Activated CD4-positive, alpha-beta T cell treated with anti-CD3 and anti-CD28 coated beads for 36 hours (primary cell): ENCODE measurements at regions of chr2 and their contacts with region 1.

Region 1: DNA sequence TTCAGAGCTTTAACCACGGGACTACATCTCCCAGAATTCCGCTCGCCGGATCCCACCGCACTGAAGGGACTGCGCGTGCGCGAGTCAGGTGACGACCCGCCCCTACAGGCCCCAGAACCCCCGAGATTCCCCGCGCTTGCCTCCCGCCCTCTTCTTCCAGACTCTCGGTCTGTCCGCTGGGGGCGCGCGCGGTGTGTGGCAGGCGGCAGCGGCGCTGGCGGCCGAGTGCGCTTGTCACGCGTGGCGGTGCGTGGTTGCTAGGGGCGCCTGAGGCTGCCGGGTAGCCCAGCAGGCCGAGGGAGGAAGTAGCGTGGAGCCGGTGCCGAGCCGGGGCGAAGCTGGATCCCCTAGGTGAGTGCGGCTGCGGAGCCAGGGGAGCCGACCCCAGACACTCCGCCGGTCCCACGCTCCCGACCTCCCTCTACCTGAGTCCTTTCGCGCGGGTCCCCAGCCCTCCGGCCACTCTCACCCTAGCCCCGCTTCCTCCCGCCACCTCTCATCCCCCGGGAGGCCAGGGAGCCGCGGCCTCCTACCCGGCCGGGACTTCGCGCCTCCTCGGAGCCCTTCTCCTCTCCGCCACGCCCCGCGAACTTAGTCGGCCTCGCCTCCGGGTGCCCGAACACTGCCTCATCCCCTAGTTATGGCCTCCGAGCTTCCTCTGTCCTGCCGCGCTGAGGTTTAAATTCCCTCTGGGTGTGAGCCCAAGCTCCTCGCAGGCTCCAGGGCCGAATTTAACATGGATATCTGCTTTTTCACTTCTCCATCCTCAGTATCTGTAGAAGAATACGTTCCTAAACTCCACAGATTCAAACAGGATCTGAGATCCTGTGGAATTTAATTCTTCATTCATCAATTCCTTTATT is at the start of gene TTLL4:
- DNase-seq: peak; percentile 99
- ATAC-seq: peak; percentile 98
- H3K4me3 Mint-ChIP-seq: peak within 1 kb of the TSS; percentile 96
- H3K27ac Mint-ChIP-seq: peak within 1 kb of the TSS; percentile 80
- H3K4me1 Mint-ChIP-seq: peaks cover 20% of the 10 kb centered on the region
- H3K27me3 Mint-ChIP-seq: no peaks in the 10 kb centered on the region
- total RNA-seq, gene TTLL4: 33.7 to 46.6 TPM

Region 2: DNA sequence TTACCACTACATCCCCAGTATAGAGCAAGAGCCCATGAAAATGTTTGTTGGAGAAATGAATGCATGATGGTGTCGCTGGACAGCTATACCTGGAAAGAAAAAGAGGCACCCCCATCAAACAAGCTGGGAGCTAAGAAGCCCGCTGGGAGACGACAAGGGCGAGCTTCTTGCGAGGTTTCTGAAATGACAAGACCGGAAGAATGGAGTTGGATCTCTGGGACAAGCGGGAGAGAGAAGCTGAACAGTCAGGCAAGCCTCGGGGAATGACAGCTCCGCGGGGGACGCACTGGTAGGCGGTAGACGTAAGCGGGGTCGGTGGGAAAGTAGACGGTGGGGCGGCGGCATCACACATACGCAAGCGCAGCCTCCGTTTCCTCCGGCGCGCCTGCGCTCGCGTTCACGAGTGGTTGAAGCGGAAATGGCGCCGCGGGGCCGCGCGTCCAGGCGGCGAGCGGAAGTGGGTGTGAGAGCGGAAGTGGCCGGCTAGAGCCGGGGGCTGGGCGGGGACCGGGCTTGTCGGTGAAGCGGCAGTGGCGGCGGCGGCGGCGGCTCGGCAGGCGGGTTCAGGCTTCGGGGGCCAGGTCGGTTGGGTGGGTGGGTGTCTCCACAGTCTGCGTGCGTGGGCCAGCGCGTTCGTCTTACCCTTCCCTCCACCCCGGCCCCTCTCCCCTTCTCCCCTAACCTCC is 494.1 kb before region 1 on chr2 and contains the start of gene ARPC2:
- CTCF ChIA-PET with region 1: no interaction called
- POLR2A ChIA-PET with region 1: no interaction called
- intact Hi-C with region 1: loop called in 1 of 2 experiments (anchors 1 kb)
- DNase-seq: peak; percentile 96
- ATAC-seq: peak; percentile 64
- H3K4me3 Mint-ChIP-seq: peak within 1 kb of the TSS; percentile 81
- H3K27ac Mint-ChIP-seq: peak within 1 kb of the TSS; percentile 96
- H3K4me1 Mint-ChIP-seq: peaks cover 34% of the 10 kb centered on the region
- H3K27me3 Mint-ChIP-seq: no peaks in the 10 kb centered on the region
- total RNA-seq, gene ARPC2: 563 to 632 TPM

Region 3: DNA sequence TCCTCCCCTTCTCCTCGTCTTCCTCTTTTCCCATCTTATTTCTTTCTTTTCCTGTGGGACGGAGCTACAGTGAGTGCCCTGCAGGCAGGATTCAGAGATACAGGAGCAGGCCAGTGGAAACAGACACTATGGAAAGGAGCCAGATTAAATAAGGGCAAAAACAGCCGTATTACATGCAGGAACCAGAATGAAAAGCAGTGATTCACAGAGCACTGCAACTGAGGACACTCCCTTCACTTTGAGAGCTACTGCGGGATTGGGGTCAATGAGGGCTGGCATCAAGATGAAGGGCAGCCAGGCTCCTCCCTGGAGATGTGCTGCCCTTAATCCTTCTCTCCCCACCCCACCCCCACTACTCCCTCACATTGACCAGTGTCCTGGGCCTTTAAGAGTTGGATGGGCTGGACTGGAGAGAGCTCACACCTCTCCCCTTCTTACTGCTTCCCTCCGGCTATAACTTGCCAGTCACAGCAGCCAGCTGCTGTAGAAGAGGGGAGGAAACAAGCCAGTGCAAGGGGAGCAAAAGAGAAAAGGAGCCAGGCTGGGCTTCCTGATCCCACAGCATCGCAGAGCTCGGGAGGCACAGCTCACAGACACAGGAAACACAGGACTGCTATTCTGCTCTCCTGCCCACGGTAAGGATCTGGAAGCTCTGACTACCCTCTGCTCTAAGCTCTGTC is 103.3 kb before region 1 on chr2 and contains the start of gene PLCD4:
- CTCF ChIA-PET with region 1: no interaction called
- POLR2A ChIA-PET with region 1: no interaction called
- intact Hi-C with region 1: no loop called
- DNase-seq: no peak
- ATAC-seq: no peak
- H3K4me3 Mint-ChIP-seq: no peak within 1 kb of the TSS
- H3K27ac Mint-ChIP-seq: no peak within 1 kb of the TSS
- H3K4me1 Mint-ChIP-seq: no peaks in the 10 kb centered on the region
- H3K27me3 Mint-ChIP-seq: peaks cover 12% of the 10 kb centered on the region
- total RNA-seq, gene PLCD4: 0.18 to 0.83 TPM

Region 4: DNA sequence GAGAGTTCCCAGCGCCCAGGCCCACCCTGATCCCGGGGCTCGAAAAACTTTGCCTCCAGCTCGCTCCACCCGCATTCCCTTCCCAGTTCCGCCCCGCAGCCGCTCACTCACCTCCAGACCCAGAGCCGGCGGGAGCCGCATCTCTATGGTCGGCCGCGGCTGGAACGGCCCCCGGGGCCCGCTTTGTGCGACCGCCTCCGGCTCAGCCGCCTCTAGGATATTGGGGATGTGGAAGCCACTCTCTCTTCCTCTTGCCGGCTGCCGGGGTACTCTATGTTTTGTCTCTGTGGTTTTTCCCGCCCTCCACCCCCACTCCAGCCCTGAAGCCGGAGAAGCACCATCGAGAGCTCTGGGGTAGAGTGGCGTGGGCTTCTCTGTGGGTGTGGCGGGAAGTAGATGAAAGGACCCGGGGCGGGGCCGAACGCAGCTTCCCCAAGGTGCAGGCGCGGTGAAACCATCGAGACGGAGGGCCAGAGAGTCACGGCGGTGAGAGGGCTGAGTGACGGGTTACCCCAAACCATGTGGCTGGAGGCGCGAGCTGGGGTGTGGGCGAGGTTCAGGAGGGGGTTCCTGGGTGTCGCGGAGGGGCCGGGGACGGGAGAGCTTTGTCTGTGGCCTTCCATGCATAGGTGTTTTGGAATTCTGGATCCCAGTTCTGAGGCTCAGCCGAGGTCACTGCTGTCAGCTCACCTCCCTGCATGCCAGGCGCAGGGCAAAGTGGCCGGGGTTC is 51.5 kb before region 1 on chr2 and contains the starts of genes BCS1L and ZNF142:
- CTCF ChIA-PET with region 1: interaction called, 5 read pairs
- POLR2A ChIA-PET with region 1: interaction called, 4 read pairs
- intact Hi-C with region 1: loop called (anchors 1 kb)
- DNase-seq: peak; percentile 98
- ATAC-seq: peak; percentile 95
- H3K4me3 Mint-ChIP-seq: peak within 1 kb of the TSS; percentile 88
- H3K27ac Mint-ChIP-seq: peak within 1 kb of the TSS; percentile 89
- H3K4me1 Mint-ChIP-seq: peaks cover 35% of the 10 kb centered on the region
- H3K27me3 Mint-ChIP-seq: no peaks in the 10 kb centered on the region
- total RNA-seq, gene BCS1L: 74.3 to 92.3 TPM
- total RNA-seq, gene ZNF142: 31.5 to 42.4 TPM

Region 5: GRCh38 chr2:218691234-218691633 is 19.7 kb before region 1 on chr2:
- CTCF ChIA-PET with region 1: interaction called, 12 read pairs
- POLR2A ChIA-PET with region 1: no interaction called
- intact Hi-C with region 1: no loop called
- DNase-seq: no peak
- ATAC-seq: no peak
- H3K4me3 Mint-ChIP-seq: no peak overlapping the region
- H3K27ac Mint-ChIP-seq: no peak overlapping the region
- H3K4me1 Mint-ChIP-seq: peaks cover 2% of the 10 kb centered on the region
- H3K27me3 Mint-ChIP-seq: no peaks in the 10 kb centered on the region

Region 6: GRCh38 chr2:218876562-218877219 is 165.8 kb after region 1 on chr2:
- CTCF ChIA-PET with region 1: interaction called, 8 read pairs
- POLR2A ChIA-PET with region 1: no interaction called
- intact Hi-C with region 1: loop called in 1 of 2 experiments (anchors 1 kb)
- DNase-seq: peak; percentile 83
- ATAC-seq: no peak
- H3K4me3 Mint-ChIP-seq: no peak overlapping the region
- H3K27ac Mint-ChIP-seq: no peak overlapping the region
- H3K4me1 Mint-ChIP-seq: peaks cover 43% of the 10 kb centered on the region
- H3K27me3 Mint-ChIP-seq: peaks cover 39% of the 10 kb centered on the region

Region 7: GRCh38 chr2:219010162-219010756 is 299.3 kb after region 1 on chr2:
- CTCF ChIA-PET with region 1: no interaction called
- POLR2A ChIA-PET with region 1: no interaction called
- intact Hi-C with region 1: no loop called
- DNase-seq: peak; percentile 52
- ATAC-seq: peak; percentile 73
- H3K4me3 Mint-ChIP-seq: no peak overlapping the region
- H3K27ac Mint-ChIP-seq: no peak overlapping the region
- H3K4me1 Mint-ChIP-seq: no peaks in the 10 kb centered on the region
- H3K27me3 Mint-ChIP-seq: peaks cover 35% of the 10 kb centered on the region